ENCODE measurements at regions of chr9 and their contacts with region 1.

Region 1: DNA sequence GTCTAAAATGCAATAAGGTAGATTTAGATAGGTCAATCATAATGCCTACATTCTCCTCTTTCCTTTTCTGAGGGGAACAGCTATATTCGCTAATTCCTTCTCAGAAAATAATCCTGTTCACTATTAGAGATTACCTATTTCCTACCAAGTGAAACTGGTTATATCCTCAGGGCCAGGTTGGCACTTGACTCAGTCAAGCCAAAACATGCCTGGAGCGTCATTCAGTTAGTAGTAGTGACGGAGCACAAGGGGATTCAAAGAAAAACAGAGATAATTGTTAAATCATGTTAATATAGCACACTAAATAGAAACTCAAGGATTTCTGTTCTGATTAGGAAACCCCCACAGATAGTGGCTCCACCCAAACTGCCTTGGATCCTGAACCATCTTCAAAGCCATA is 515.4 kb upstream of the PTPRD start:
- DNase-seq: no peak

Region 2: DNA sequence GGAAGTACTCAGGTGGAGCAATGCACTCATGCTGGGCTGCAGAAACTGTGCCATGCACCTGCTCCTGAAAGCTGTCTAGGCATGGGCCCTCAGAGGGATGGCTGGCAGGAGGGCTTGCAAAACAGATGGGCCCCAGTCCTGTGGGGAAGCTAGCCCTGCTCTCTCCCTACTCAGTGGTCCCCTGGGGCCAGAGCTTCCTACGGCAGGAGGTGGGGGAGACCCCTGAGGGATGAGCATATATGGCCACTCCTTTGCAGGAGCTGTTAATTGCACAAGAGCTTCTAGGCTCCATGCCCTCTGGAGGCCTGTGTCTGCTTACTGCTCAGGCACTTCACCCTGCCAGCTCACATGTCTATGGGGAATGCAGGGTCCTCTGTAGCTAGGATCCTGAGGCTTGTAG is 29.9 kb after region 1 on chr9:
- intact Hi-C with region 1: no loop called
- DNase-seq: no peak

Region 3: GRCh38 chr9:11182001-11182400 is 53.8 kb after region 1 on chr9:
- intact Hi-C with region 1: loop called (anchors 10 kb)
- DNase-seq: no peak